ENCODE measurements at regions of chr4 and their contacts with region 1.

Region 1: DNA sequence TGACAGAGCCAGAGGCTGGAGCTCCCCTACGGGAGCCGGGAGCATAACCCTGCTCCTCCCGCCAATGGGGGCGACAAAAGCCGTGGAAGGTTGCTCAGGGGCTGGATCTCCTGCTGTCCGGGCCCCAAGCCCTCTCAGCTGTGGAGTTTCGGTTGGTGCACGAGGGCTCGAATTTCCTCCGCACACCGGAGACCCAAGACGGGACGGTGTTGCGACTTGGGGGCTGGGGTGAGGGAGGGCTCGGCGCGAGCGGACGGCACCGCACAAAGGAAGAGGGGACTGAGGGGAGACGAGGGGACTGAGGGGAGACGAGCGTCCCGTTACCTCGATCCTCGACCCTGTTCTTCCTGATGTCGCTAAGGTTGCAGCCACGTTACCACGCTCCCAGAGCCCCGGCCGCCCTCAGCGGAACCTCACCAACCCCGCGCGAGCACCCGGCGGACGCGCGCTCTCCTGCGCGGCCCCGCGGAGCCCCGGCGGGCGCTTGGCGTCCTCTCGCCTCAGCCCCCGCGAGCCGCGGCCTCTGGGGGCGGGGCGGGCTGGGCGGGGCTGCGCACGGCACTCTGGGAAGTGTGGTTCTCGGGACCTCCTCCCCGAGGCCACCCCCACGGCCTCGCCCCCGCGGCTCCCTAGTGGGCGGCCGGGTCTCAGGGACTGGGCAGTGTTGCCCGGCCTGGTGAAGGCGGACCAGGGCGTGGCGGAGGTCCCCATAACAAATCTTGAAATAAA is at the start of gene KLHL8:
- DNase-seq: peak; percentile 92
- H3K4me3 Mint-ChIP-seq: peak within 1 kb of the TSS; percentile 89
- H3K27ac Mint-ChIP-seq: peak within 1 kb of the TSS; percentile 79
- H3K4me1 Mint-ChIP-seq: peaks cover 10% of the 10 kb centered on the region
- H3K27me3 Mint-ChIP-seq: no peaks in the 10 kb centered on the region
- total RNA-seq, gene KLHL8: 10.2 to 11.0 TPM

Region 2: GRCh38 chr4:87103691-87104187 is 116.5 kb before region 1 on chr4:
- CTCF ChIA-PET with region 1: no interaction called
- POLR2A ChIA-PET with region 1: no interaction called
- intact Hi-C with region 1: loop called (anchors 5 kb)
- DNase-seq: no peak
- H3K4me3 Mint-ChIP-seq: peak overlapping the region; percentile 57
- H3K27ac Mint-ChIP-seq: peak overlapping the region; percentile 84
- H3K4me1 Mint-ChIP-seq: peaks cover 72% of the 10 kb centered on the region
- H3K27me3 Mint-ChIP-seq: no peaks in the 10 kb centered on the region

Region 3: DNA sequence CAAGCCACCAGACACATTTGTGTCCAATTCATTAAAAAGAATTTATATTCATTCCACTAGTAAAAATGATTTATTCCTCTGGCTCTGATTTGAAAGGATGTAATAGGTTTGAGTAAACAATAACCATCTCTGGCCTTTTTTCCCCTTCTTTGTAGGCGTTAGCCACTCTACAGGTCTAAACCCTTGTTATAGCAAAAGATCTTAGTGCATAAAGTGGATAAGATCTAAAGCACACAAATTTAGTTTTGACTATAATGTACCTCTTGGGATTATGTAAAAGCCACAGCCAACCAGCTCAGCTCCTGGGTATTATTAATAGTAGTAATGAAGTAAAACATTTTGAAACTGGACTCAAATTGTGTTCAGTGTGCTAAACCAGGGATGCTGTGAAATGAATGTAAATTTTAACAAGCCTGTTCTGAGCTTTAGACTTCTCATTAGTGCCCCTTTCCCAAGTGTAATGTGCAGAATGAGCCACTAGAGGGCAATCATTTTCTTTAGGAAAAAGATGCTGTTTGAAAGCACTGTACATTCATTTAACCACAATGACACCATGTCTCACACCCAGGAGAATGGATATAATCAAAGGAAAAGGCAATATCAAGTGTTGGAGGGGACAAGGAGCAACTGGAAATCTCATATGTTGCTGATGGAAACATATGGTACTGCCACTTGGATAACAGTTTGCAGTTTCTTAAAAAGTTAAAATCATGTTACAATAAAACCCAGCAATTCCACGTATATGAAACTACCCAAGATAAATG is 69.6 kb before region 1 on chr4:
- CTCF ChIA-PET with region 1: interaction called, 15 read pairs
- POLR2A ChIA-PET with region 1: no interaction called
- intact Hi-C with region 1: no loop called
- DNase-seq: no peak
- H3K4me3 Mint-ChIP-seq: no peak overlapping the region
- H3K27ac Mint-ChIP-seq: no peak overlapping the region
- H3K4me1 Mint-ChIP-seq: no peaks in the 10 kb centered on the region
- H3K27me3 Mint-ChIP-seq: no peaks in the 10 kb centered on the region

Region 4: GRCh38 chr4:87235020-87235671 is 14.9 kb after region 1 on chr4:
- CTCF ChIA-PET with region 1: interaction called, 9 read pairs
- POLR2A ChIA-PET with region 1: no interaction called
- intact Hi-C with region 1: loop called (anchors 1 kb)
- DNase-seq: no peak
- H3K4me3 Mint-ChIP-seq: peak overlapping the region; percentile 73
- H3K27ac Mint-ChIP-seq: no peak overlapping the region
- H3K4me1 Mint-ChIP-seq: no peaks in the 10 kb centered on the region
- H3K27me3 Mint-ChIP-seq: peaks cover 2% of the 10 kb centered on the region

Region 5: GRCh38 chr4:88007304-88008121 is 787.3 kb after region 1 on chr4 and contains the start of gene PKD2:
- CTCF ChIA-PET with region 1: no interaction called
- POLR2A ChIA-PET with region 1: no interaction called
- intact Hi-C with region 1: loop called (anchors 10 kb)
- DNase-seq: peak; percentile 84
- H3K4me3 Mint-ChIP-seq: peak within 1 kb of the TSS; percentile 88
- H3K27ac Mint-ChIP-seq: no peak within 1 kb of the TSS
- H3K4me1 Mint-ChIP-seq: peaks cover 19% of the 10 kb centered on the region
- H3K27me3 Mint-ChIP-seq: peaks cover 11% of the 10 kb centered on the region
- total RNA-seq, gene PKD2: 4.0 to 4.2 TPM